Naive thymus-derived CD4-positive, alpha-beta T cell (primary cell): ENCODE measurements at regions of chr4 and their contacts with region 1.

Region 1: DNA sequence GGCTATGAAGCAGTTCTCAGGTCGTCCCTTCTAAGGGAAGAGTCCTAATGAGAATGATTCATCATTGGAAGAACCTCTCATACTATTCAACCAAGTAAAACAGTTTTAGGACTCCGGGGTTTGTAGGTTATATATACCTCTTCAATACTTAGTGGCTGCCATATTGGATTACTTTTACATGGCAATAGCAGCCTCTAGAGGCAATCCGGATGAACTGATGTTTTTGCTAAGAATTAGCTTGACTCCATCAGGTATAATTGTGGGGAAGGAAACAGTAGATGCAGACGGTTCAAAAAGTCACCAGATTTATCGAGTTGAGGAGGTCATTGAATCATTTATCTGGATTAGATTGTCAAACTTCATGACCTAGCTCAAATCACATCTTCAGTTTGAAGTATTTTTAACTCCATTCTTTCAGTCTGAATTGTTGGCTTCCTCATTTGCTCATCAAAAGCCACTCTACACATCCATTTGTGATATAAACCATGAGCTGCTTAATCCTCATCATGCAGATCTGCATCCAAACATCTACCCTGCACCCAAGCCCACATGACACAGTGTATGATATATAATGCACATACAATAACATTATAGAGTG is 28.4 kb downstream of the GUCY1B1 start:
- DNase-seq: peak in 5 of 9 donors; percentile 4 to 46 (median 8)
- ATAC-seq: peak; percentile 82
- H3K4me3 ChIP-seq: no peak overlapping the region
- H3K4me3 Mint-ChIP-seq: no peak overlapping the region
- H3K27ac ChIP-seq: no peak overlapping the region
- H3K27ac Mint-ChIP-seq: no peak overlapping the region
- H3K4me1 ChIP-seq: no peaks in the 10 kb centered on the region
- H3K4me1 Mint-ChIP-seq: peaks cover 0 to 9% (median 0%) of the 10 kb centered on the region in 7 donors
- H3K27me3 ChIP-seq: peaks cover 0 to 3% of the 10 kb centered on the region in 2 donors
- H3K27me3 Mint-ChIP-seq: peaks cover 0 to 11% (median 9%) of the 10 kb centered on the region in 5 donors

Region 2: GRCh38 chr4:154642373-154643009 is 1144.7 kb before region 1 on chr4:
- CTCF ChIA-PET with region 1: no interaction called
- POLR2A ChIA-PET with region 1: no interaction called
- intact Hi-C with region 1: loop called in 1 of 2 experiments (anchors 5 kb)
- DNase-seq: no peak
- ATAC-seq: no peak
- H3K4me3 ChIP-seq: no peak overlapping the region
- H3K4me3 Mint-ChIP-seq: no peak overlapping the region
- H3K27ac ChIP-seq: no peak overlapping the region
- H3K27ac Mint-ChIP-seq: no peak overlapping the region
- H3K4me1 ChIP-seq: no peaks in the 10 kb centered on the region
- H3K4me1 Mint-ChIP-seq: no peaks in the 10 kb centered on the region
- H3K27me3 ChIP-seq: no peaks in the 10 kb centered on the region
- H3K27me3 Mint-ChIP-seq: peaks cover 7 to 31% (median 24%) of the 10 kb centered on the region in 5 donors

Region 3: GRCh38 chr4:154807042-154807630 is 980.1 kb before region 1 on chr4:
- CTCF ChIA-PET with region 1: no interaction called
- POLR2A ChIA-PET with region 1: no interaction called
- intact Hi-C with region 1: loop called in 1 of 2 experiments (anchors 1 kb)
- DNase-seq: peak in 1 of 9 donors; percentile 15
- ATAC-seq: peak; percentile 41
- H3K4me3 ChIP-seq: no peak overlapping the region
- H3K4me3 Mint-ChIP-seq: peak overlapping the region in 1 of 10 donors; percentile 6
- H3K27ac ChIP-seq: no peak overlapping the region
- H3K27ac Mint-ChIP-seq: no peak overlapping the region
- H3K4me1 ChIP-seq: no peaks in the 10 kb centered on the region
- H3K4me1 Mint-ChIP-seq: peaks cover 0 to 4% (median 0%) of the 10 kb centered on the region in 7 donors
- H3K27me3 ChIP-seq: no peaks in the 10 kb centered on the region
- H3K27me3 Mint-ChIP-seq: peaks cover 0 to 16% (median 7%) of the 10 kb centered on the region in 5 donors

Region 4: GRCh38 chr4:154982187-154983047 is 804.8 kb before region 1 on chr4:
- CTCF ChIA-PET with region 1: no interaction called
- POLR2A ChIA-PET with region 1: no interaction called
- intact Hi-C with region 1: loop called (anchors 2 to 10 kb)
- DNase-seq: peak in 5 of 9 donors; percentile 3 to 24 (median 7)
- ATAC-seq: peak; percentile 38
- H3K4me3 ChIP-seq: no peak overlapping the region
- H3K4me3 Mint-ChIP-seq: no peak overlapping the region
- H3K27ac ChIP-seq: no peak overlapping the region
- H3K27ac Mint-ChIP-seq: no peak overlapping the region
- H3K4me1 ChIP-seq: no peaks in the 10 kb centered on the region
- H3K4me1 Mint-ChIP-seq: peaks cover 0 to 3% (median 0%) of the 10 kb centered on the region in 7 donors
- H3K27me3 ChIP-seq: no peaks in the 10 kb centered on the region
- H3K27me3 Mint-ChIP-seq: peaks cover 0 to 19% (median 9%) of the 10 kb centered on the region in 5 donors

Region 5: GRCh38 chr4:155442267-155443105 is 344.7 kb before region 1 on chr4:
- CTCF ChIA-PET with region 1: interaction called, 4 read pairs
- POLR2A ChIA-PET with region 1: no interaction called
- intact Hi-C with region 1: loop called in 1 of 2 experiments (anchors 1 kb)
- DNase-seq: peak in 8 of 9 donors; percentile 10 to 67 (median 32)
- ATAC-seq: peak; percentile 82
- H3K4me3 ChIP-seq: no peak overlapping the region
- H3K4me3 Mint-ChIP-seq: peak overlapping the region in 3 of 10 donors; percentile 6 to 45 (median 20)
- H3K27ac ChIP-seq: no peak overlapping the region
- H3K27ac Mint-ChIP-seq: no peak overlapping the region
- H3K4me1 ChIP-seq: no peaks in the 10 kb centered on the region
- H3K4me1 Mint-ChIP-seq: peaks cover 0 to 3% (median 0%) of the 10 kb centered on the region in 7 donors
- H3K27me3 ChIP-seq: no peaks in the 10 kb centered on the region
- H3K27me3 Mint-ChIP-seq: peaks cover 16 to 28% (median 22%) of the 10 kb centered on the region in 5 donors

Region 6: GRCh38 chr4:155529272-155529671 is 257.9 kb before region 1 on chr4:
- CTCF ChIA-PET with region 1: no interaction called
- POLR2A ChIA-PET with region 1: no interaction called
- intact Hi-C with region 1: loop called in 1 of 2 experiments (anchors 2 kb)
- DNase-seq: no peak
- ATAC-seq: no peak
- H3K4me3 ChIP-seq: no peak overlapping the region
- H3K4me3 Mint-ChIP-seq: no peak overlapping the region
- H3K27ac ChIP-seq: no peak overlapping the region
- H3K27ac Mint-ChIP-seq: no peak overlapping the region
- H3K4me1 ChIP-seq: no peaks in the 10 kb centered on the region
- H3K4me1 Mint-ChIP-seq: peaks cover 0 to 5% (median 0%) of the 10 kb centered on the region in 7 donors
- H3K27me3 ChIP-seq: no peaks in the 10 kb centered on the region
- H3K27me3 Mint-ChIP-seq: peaks cover 3 to 27% (median 5%) of the 10 kb centered on the region in 5 donors